HepG2 (cell line): ENCODE measurements at regions of chr12 and their contacts with region 1.

Region 1: DNA sequence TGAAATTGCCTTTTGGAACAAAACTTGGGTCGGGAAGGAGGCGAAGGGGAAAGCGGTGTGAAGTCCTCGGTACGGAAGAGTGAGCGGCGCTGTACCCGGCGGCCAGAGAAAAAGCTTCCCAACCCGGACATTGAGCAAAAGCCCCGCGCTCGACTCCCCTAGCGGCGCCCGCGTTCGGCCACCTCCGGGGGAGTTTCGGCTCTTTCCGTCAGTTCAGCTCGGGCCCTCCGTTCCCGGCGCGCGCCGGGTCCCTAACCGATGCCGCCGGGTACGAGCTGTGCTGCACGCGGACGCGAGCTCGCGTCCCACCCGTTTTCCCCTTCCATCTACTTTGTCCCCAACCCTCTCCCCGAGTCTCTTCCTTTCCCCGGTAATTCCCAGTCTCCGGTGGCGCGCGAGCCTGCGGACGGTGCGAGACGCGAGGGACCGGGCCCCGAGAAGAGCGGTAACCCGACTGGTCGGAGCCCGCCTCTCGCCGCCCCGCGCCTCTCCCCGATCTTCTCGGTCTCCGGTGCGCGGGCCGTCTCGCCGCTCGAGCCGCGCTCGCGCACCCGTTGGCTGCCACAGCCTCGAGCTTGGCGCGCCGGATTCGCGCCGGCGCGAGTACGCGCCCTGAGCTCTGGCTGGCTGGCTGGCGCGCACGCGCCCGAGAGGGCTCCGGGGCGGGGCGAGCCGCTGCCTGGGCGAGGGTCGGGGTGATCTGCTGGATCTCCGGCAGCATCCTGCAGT is 446 bp upstream of the SPATS2 start:
- DNase-seq: peak; percentile 88
- ATAC-seq: peak; percentile 87
- H3K4me3 ChIP-seq: peak overlapping the region; percentile 80 to 97 (median 83)
- H3K27ac ChIP-seq: peak overlapping the region; percentile 97
- H3K4me1 ChIP-seq: peaks cover 56% of the 10 kb centered on the region
- H3K27me3 ChIP-seq: no peaks in the 10 kb centered on the region; a peak in 1 of 5 replicates
- CTCF ChIP-seq: no peak
- EP300 ChIP-seq: no peak
- POLR2A ChIP-seq: peak; percentile 62 to 81
- RAD21 ChIP-seq: peak; percentile 55; the same call in 1 of the 2 replicates

Region 2: DNA sequence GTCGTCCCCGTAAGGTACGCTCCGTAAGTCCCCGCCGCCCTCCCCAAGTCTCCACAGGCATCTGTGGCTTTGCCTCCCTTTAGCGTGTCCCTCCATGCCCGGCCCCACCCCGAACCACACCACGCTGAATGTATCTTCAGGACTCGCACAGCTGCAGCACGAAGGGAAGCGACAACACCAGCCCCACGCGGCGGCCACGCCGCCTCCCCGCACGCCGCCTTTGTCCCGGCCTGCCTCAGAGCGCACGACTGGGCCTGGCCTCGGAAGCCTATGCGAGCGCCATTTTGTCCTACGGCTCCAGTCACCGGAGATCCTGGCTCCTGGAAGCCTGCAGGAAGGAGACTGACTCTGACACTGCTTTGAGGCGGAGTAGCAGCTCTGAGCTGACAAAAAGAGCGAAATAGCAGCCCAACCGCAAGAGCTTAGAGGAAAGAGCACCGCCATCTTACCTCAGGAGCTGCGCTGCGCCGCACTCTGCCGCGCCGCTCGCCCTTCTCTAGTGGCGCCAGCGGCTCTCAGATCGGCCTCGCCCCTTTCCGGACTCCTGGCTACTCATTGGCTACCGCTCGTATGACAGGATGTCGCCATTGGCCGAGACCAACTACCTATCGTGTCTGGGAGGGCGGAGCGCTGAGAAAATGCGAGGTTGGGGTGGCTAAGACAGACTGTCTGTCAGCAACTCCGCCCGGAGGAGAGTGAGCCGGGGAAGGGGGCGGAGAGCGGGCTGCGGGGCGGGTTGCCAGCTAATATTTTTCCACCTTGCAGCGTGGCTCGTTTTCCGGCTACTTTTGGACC is 684.9 kb before region 1 on chr12 and contains the start of gene KANSL2:
- CTCF ChIA-PET with region 1: no interaction called
- POLR2A ChIA-PET with region 1: no interaction called
- in situ Hi-C with region 1: no loop called
- intact Hi-C with region 1: no loop called
- DNase-seq: peak; percentile 98
- ATAC-seq: peak; percentile 97
- H3K4me3 ChIP-seq: peak within 1 kb of the TSS; percentile 82 to 91 (median 85)
- H3K27ac ChIP-seq: peak within 1 kb of the TSS; percentile 93
- H3K4me1 ChIP-seq: peaks cover 39% of the 10 kb centered on the region
- H3K27me3 ChIP-seq: no peaks in the 10 kb centered on the region; a peak in 1 of 5 replicates
- CTCF ChIP-seq: peak; percentile 32
- EP300 ChIP-seq: peak in 1 of 2 experiments; percentile 1; a peak in 1 of 4 replicates
- POLR2A ChIP-seq: peak; percentile 99
- RAD21 ChIP-seq: peak; percentile 8; the same call in 1 of the 2 replicates
- total RNA-seq, gene KANSL2: 40.1 and 41.3 TPM in 2 replicates

Region 3: DNA sequence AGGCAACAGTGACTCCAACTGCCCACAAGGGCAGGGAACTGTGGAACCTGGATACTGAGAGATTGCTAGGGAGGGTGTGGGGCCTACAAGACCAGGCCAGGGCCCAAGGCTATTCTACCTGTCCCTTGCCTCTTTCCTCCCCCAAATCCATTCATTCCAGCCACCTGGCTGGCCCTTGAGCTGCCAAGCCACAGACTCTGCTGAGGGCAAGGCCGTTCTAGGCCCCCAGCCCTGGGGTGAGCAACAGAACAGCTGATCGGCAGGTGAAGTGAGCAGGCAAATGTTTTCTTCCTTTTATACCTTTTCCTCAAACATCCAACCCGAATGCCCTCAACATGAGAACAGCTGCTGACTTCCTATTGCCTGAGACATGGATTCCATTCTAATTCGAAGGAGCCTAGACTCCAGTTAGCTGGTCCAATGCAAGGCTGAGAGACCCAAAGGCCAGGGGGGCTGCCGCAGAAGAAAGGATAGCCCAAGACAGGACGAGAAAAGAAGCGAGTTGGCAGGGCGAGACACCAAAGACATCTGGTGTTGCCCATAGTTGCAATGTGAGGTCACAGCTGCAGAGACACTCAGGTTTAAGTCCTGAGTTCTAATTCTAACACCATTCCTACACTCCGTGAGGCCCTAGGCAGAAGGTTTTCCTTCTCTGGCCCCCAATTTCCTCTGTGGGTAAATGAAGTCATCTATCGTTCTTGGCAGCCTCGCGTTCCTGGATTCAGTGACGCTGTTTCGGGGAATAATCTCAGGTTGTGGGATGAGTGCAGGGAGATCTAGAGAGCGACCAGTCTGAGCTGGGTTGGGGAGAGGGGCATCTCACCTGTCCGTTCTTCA is 31.5 kb before region 1 on chr12:
- CTCF ChIA-PET with region 1: no interaction called
- POLR2A ChIA-PET with region 1: no interaction called
- in situ Hi-C with region 1: no loop called
- intact Hi-C with region 1: no loop called
- DNase-seq: no peak
- ATAC-seq: no peak
- H3K4me3 ChIP-seq: no peak overlapping the region
- H3K27ac ChIP-seq: no peak overlapping the region
- H3K4me1 ChIP-seq: peaks cover 30% of the 10 kb centered on the region
- H3K27me3 ChIP-seq: peaks cover 2 to 47% of the 10 kb centered on the region in 2 experiments; a peak in 4 of 5 replicates
- CTCF ChIP-seq: no peak
- EP300 ChIP-seq: no peak
- POLR2A ChIP-seq: no peak
- RAD21 ChIP-seq: no peak

Region 4: GRCh38 chr12:49347384-49348237 is 19.2 kb before region 1 on chr12:
- CTCF ChIA-PET with region 1: no interaction called
- POLR2A ChIA-PET with region 1: interaction called, 41 read pairs
- in situ Hi-C with region 1: no loop called
- intact Hi-C with region 1: no loop called
- DNase-seq: peak; percentile 95
- ATAC-seq: peak; percentile 92
- H3K4me3 ChIP-seq: peak overlapping the region; percentile 63 to 86 (median 84)
- H3K27ac ChIP-seq: peak overlapping the region; percentile 85
- H3K4me1 ChIP-seq: peaks cover 64% of the 10 kb centered on the region
- H3K27me3 ChIP-seq: peaks cover 13 to 40% of the 10 kb centered on the region in 2 experiments; a peak in 4 of 5 replicates
- CTCF ChIP-seq: peak; percentile 97
- EP300 ChIP-seq: peak in 1 of 2 experiments; percentile 56; a peak in 1 of 4 replicates
- POLR2A ChIP-seq: peak; percentile 98
- RAD21 ChIP-seq: peak; percentile 73

Region 5: DNA sequence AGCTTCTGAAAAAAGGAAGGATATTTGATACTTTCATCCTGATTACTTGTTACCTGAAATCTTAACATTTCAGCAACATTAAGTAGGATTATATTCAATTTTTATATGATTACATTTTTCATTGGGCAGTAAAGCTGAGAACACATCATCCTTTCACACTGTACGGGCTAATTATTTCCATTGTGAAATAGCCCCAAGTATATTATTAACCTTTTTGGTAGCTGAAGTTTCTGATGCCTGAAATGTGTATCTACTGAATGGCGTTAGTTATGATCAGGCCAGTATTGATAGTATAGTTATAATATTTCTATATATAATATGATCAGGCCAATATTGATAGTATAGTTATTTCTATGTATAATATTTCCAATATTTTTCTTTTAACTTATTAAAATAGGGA is 10.6 kb after region 1 on chr12:
- CTCF ChIA-PET with region 1: no interaction called
- POLR2A ChIA-PET with region 1: interaction called, 10 read pairs
- in situ Hi-C with region 1: no loop called
- intact Hi-C with region 1: no loop called
- DNase-seq: no peak
- ATAC-seq: no peak
- H3K4me3 ChIP-seq: no peak overlapping the region
- H3K27ac ChIP-seq: no peak overlapping the region
- H3K4me1 ChIP-seq: peaks cover 22% of the 10 kb centered on the region
- H3K27me3 ChIP-seq: no peaks in the 10 kb centered on the region
- CTCF ChIP-seq: no peak
- EP300 ChIP-seq: no peak
- POLR2A ChIP-seq: no peak
- RAD21 ChIP-seq: no peak

Region 6: DNA sequence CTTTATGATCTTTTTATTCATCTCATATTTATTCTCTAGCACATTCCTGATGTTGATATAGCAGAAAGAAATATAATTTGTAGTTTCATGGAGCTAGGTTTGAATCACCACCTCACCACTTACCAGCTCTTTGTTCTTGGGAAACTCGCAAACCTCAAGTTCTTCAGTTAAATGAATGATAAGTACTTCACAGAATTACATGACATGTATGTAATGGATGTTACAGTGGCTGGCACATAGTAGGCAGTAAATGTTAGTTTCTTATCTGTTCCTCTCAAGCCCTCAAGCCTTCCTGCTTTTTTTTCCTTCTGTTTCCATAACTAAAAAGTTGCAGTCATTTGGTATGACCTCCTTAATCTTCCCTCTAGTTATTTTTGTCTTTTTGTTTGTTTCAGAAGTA is 55.3 kb after region 1 on chr12:
- CTCF ChIA-PET with region 1: no interaction called
- POLR2A ChIA-PET with region 1: interaction called, 30 read pairs
- in situ Hi-C with region 1: no loop called
- intact Hi-C with region 1: loop called (anchors 10 kb)
- DNase-seq: no peak
- ATAC-seq: no peak
- H3K4me3 ChIP-seq: peak overlapping the region in 1 of 3 experiments; percentile 11; a peak in 1 of 6 replicates
- H3K27ac ChIP-seq: peak overlapping the region; percentile 58
- H3K4me1 ChIP-seq: peaks cover 68% of the 10 kb centered on the region
- H3K27me3 ChIP-seq: no peaks in the 10 kb centered on the region
- CTCF ChIP-seq: no peak
- EP300 ChIP-seq: no peak
- POLR2A ChIP-seq: no peak
- RAD21 ChIP-seq: no peak

Region 7: GRCh38 chr12:49428793-49429192 is 62.0 kb after region 1 on chr12:
- CTCF ChIA-PET with region 1: no interaction called
- POLR2A ChIA-PET with region 1: interaction called, 3 read pairs
- in situ Hi-C with region 1: no loop called
- intact Hi-C with region 1: loop called (anchors 10 kb)
- DNase-seq: no peak
- ATAC-seq: no peak
- H3K4me3 ChIP-seq: no peak overlapping the region
- H3K27ac ChIP-seq: no peak overlapping the region
- H3K4me1 ChIP-seq: 0 out of 2 replicates have a peak, but pooled peaks cover 5% of the 10 kb centered on the region
- H3K27me3 ChIP-seq: no peaks in the 10 kb centered on the region
- CTCF ChIP-seq: no peak
- EP300 ChIP-seq: no peak
- POLR2A ChIP-seq: no peak
- RAD21 ChIP-seq: no peak

Region 8: DNA sequence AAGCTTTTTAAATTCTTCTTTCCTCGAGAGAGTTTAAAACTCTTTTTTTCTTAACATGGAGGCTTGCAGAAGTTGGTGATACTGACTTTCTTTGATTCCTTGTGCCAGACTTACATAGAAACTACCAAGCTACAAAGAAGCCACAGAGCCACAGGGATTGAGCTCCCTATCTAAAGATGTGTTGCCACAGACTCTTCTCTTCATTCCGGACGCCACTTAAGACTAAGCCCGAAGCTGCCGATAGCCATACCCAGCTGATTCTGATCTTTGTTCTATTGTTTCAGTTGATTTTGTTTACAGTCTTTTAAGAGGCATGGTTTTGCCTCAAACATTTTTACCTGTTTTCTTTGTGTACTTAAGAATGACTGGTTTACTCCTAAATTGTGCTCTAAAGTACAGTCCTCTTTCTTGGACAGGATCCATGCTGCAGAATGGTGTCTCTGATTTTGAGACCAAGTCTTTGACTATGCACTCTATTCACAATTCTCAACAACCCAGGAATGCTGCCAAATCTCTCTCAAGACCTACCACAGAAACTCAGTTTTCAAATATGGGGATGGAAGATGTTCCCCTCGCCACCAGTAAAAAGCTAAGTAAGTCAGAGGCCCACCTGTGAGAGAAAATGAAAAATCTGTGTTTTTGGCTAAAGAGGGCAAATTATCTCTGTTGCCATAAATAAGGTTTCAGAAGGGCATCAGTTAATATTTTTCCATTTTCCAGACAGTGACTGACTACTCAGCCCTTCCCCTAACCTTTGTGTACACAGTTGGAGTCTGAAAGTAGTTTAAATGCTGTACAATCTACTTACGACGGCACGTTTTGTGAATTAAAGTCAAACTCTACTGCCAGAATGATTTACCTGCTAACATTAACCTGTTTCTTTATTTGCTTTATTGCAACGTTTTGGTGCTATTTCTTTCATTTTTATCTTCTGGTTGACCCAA is 129.9 kb after region 1 on chr12:
- CTCF ChIA-PET with region 1: no interaction called
- POLR2A ChIA-PET with region 1: interaction called, 6 read pairs
- in situ Hi-C with region 1: loop called (anchors 5 kb)
- intact Hi-C with region 1: no loop called
- DNase-seq: no peak
- ATAC-seq: no peak
- H3K4me3 ChIP-seq: no peak overlapping the region
- H3K27ac ChIP-seq: no peak overlapping the region
- H3K4me1 ChIP-seq: no peaks in the 10 kb centered on the region
- H3K27me3 ChIP-seq: no peaks in the 10 kb centered on the region
- CTCF ChIP-seq: no peak
- EP300 ChIP-seq: no peak
- POLR2A ChIP-seq: no peak
- RAD21 ChIP-seq: no peak